T-cell (primary cell): ENCODE measurements at regions of chr12 and their contacts with region 1.

Region 1: DNA sequence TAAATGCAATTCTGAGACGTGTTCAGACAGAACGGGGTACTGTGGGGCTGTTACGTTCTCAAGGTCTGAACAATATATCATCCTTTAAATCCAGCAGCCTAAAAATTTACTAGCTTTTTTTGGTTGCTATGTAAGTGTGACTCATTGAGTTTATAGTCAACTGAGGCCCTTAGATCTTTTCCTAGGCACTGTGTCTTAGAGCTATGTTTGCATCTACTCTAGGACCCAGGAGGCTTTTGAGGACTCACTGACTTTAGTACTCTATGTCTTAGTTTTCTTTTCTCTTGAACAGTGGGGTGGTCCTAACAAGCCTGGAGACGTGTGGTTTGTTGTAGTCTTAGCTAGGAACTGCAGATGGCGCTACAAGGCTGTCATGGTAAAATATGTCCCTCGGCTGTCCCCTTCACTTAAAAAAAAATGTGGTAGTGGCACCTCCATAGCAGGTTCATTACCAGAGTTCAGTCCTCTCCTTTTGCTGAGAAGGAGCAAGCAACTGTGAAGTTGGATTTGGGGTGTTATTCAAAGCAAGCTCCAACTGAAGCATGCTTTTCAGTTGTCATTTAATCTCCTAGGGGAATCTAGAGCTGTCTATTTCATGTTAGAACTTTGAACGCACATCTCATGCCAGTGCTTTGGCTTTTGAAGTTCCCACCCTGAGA is 8.7 kb upstream of the SPATS2 start:
- DNase-seq: peak in 28 of 35 experiments; percentile 35 to 86 (median 52)
- ATAC-seq: peak; percentile 83 to 98 (median 94)
- H3K4me3 ChIP-seq: no peak overlapping the region
- H3K4me3 Mint-ChIP-seq: no peak overlapping the region
- H3K27ac ChIP-seq: no peak overlapping the region
- H3K27ac Mint-ChIP-seq: no peak overlapping the region
- H3K4me1 ChIP-seq: no peaks in the 10 kb centered on the region
- H3K4me1 Mint-ChIP-seq: peaks cover 2 to 8% (median 5%) of the 10 kb centered on the region in 3 donors
- H3K27me3 ChIP-seq: peaks cover 0 to 21% of the 10 kb centered on the region in 2 experiments
- H3K27me3 Mint-ChIP-seq: peaks cover 14 to 27% of the 10 kb centered on the region in 2 donors

Region 2: DNA sequence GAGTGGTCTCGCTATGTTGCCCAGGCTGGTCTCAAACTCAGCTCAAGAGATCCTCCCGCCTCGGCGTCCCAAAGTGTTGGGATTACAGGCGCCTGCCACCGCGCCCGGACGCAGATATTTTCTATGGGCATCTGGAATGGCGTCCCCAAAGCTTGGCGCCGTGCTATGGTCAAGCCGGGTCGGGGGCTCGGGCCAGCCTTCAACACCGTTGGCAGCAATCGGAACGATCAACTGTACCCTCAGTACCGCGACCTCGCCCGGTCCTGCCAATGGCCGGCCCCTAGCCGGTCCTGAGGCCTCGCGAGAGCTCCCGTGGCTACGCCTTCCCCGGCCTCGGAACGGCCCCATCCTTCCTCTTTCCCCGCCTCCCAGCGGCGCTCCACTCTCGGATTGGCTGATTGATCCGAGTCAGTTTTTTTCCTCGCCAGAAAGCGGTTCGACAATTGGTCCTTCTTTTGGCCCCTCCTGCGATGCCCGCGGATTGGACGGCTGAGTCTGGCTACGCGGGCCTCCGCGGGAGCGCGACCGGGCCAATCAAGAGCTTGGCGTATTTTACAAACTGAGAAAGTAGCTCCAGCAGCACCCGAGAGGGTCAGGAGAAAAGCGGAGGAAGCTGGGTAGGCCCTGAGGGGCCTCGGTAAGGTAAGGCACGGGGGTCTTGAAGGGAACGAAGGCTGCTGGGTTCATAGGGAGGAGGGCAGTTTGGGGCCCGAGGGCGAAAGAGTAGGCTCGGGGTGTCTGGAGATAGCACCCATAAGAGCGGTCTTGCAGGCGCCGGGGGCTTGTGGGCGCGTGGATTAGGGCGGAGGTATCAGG is 35.7 kb before region 1 on chr12 and contains the start of gene TROAP:
- CTCF ChIA-PET with region 1: interaction called in 1 of 2 experiments, 12 read pairs
- POLR2A ChIA-PET with region 1: no interaction called
- DNase-seq: peak; percentile 92 to 98 (median 96)
- ATAC-seq: peak; percentile 96 to 99 (median 98)
- H3K4me3 ChIP-seq: peak within 1 kb of the TSS; percentile 83 to 95
- H3K4me3 Mint-ChIP-seq: peak within 1 kb of the TSS; percentile 86 to 90 (median 87)
- H3K27ac ChIP-seq: peak within 1 kb of the TSS; percentile 60
- H3K27ac Mint-ChIP-seq: peak within 1 kb of the TSS; percentile 71 to 75
- H3K4me1 ChIP-seq: peaks cover 5 to 22% of the 10 kb centered on the region in 2 experiments
- H3K4me1 Mint-ChIP-seq: peaks cover 17 to 22% (median 20%) of the 10 kb centered on the region in 3 donors
- H3K27me3 ChIP-seq: no peaks in the 10 kb centered on the region
- H3K27me3 Mint-ChIP-seq: no peaks in the 10 kb centered on the region
- total RNA-seq, gene TROAP: 0.98 to 1.9 (median 1.3) TPM

Region 3: GRCh38 chr12:49331380-49332222 is 27.0 kb before region 1 on chr12:
- CTCF ChIA-PET with region 1: interaction called, 6 to 13 read pairs
- POLR2A ChIA-PET with region 1: no interaction called
- DNase-seq: no peak
- ATAC-seq: peak in 3 of 4 experiments; percentile 37 to 67 (median 50)
- H3K4me3 ChIP-seq: no peak overlapping the region
- H3K4me3 Mint-ChIP-seq: no peak overlapping the region
- H3K27ac ChIP-seq: no peak overlapping the region
- H3K27ac Mint-ChIP-seq: no peak overlapping the region
- H3K4me1 ChIP-seq: peaks cover 0 to 14% of the 10 kb centered on the region in 2 experiments
- H3K4me1 Mint-ChIP-seq: peaks cover 1 to 15% (median 6%) of the 10 kb centered on the region in 3 donors
- H3K27me3 ChIP-seq: peaks cover 5 to 63% of the 10 kb centered on the region in 2 experiments
- H3K27me3 Mint-ChIP-seq: peaks cover 36 to 43% of the 10 kb centered on the region in 2 donors

Region 4: DNA sequence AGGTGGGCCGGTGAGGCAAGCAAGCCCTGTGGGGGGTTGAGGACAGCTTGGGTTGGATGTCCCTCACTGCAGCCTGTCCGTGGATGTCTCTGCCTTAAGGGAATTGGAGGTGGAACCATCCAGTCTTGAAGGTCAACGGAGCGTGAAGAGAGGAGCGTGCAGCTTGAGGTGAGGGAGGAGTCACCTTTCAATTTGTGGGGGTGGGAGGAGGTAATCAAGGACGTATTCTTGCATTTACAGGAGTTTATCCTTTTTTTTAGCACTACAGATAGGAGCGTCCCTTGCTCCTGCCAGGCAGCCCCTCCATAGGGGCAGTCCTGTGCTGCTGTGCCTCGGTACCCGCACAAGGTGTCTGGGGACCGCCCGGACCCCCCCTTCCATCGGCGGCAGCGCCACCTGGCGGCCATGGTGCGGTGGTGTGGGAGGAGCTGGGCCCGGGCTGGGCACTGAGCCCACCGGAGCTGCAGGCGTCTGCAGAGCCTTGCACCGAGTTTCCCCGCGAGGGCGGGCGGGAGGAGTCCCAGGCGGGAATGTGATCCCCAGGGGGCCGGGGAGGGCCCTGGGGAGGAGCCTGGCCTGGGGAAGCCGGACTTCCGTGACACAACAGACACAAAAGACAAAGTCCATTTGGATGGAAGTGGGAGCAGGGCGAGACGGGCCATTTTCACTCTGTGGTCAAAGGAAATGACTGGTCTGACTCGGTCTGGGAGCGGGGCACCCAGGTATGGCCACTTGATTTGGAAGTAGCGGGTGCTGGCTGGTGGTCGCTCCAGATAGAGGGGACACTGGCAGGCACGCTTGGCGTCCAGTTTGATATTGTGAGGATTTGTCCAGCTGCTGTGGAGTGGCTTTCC is 11.0 kb before region 1 on chr12:
- CTCF ChIA-PET with region 1: interaction called, 6 to 22 read pairs
- POLR2A ChIA-PET with region 1: interaction called in 1 of 2 experiments, 4 read pairs
- DNase-seq: peak; percentile 44 to 85 (median 71)
- ATAC-seq: peak; percentile 80 to 86 (median 82)
- H3K4me3 ChIP-seq: peak overlapping the region; percentile 47 to 86
- H3K4me3 Mint-ChIP-seq: peak overlapping the region; percentile 73 to 80 (median 80)
- H3K27ac ChIP-seq: no peak overlapping the region
- H3K27ac Mint-ChIP-seq: peak overlapping the region in 1 of 2 donors; percentile 43
- H3K4me1 ChIP-seq: peaks cover 30 to 55% of the 10 kb centered on the region in 2 experiments
- H3K4me1 Mint-ChIP-seq: peaks cover 31 to 48% (median 42%) of the 10 kb centered on the region in 3 donors
- H3K27me3 ChIP-seq: peaks cover 23 to 91% of the 10 kb centered on the region in 2 experiments
- H3K27me3 Mint-ChIP-seq: peaks cover 40 to 75% of the 10 kb centered on the region in 2 donors

Region 5: GRCh38 chr12:49462083-49462744 is 103.6 kb after region 1 on chr12:
- CTCF ChIA-PET with region 1: interaction called in 1 of 2 experiments, 11 read pairs
- POLR2A ChIA-PET with region 1: no interaction called
- DNase-seq: no peak
- ATAC-seq: no peak
- H3K4me3 ChIP-seq: no peak overlapping the region
- H3K4me3 Mint-ChIP-seq: no peak overlapping the region
- H3K27ac ChIP-seq: no peak overlapping the region
- H3K27ac Mint-ChIP-seq: no peak overlapping the region
- H3K4me1 ChIP-seq: no peaks in the 10 kb centered on the region
- H3K4me1 Mint-ChIP-seq: no peaks in the 10 kb centered on the region
- H3K27me3 ChIP-seq: no peaks in the 10 kb centered on the region
- H3K27me3 Mint-ChIP-seq: no peaks in the 10 kb centered on the region

Region 6: DNA sequence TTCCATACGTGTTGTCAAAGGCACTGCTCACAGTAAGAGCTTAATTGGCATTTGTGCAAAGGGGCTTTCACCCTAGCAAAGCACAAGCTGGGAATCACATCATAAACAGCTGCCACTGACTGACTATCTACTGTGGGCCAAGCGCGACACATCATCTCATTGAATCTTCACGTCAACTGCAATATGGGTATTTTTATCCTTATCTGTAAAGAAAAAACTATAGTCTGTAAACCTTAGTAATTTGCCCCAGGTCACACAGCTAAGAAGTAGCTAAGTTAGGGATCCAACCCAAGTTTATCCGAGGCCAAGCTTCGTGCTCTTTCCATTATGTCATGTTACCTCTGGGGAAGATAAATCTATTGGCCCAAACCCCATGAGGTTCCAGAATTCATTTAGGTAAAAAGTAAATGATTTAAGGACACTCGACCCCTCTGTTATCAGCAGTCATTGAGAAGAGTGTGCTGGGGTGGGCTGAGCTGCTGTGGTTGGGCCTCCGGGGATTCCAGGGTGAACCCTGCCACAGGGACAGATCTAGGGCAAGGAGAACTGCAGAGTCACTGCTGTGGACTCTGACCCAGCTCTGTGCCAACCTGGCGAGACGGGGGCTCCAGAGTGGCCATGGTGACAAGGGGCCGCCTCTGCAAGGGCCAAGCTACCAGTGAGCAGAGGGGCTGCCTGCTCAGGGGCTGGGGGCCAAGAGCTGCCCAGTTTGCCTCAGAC is 442.0 kb after region 1 on chr12:
- CTCF ChIA-PET with region 1: no interaction called
- POLR2A ChIA-PET with region 1: no interaction called
- DNase-seq: no peak
- ATAC-seq: no peak
- H3K4me3 ChIP-seq: no peak overlapping the region
- H3K4me3 Mint-ChIP-seq: no peak overlapping the region
- H3K27ac ChIP-seq: no peak overlapping the region
- H3K27ac Mint-ChIP-seq: no peak overlapping the region
- H3K4me1 ChIP-seq: no peaks in the 10 kb centered on the region
- H3K4me1 Mint-ChIP-seq: no peaks in the 10 kb centered on the region
- H3K27me3 ChIP-seq: no peaks in the 10 kb centered on the region
- H3K27me3 Mint-ChIP-seq: no peaks in the 10 kb centered on the region

Region 7: DNA sequence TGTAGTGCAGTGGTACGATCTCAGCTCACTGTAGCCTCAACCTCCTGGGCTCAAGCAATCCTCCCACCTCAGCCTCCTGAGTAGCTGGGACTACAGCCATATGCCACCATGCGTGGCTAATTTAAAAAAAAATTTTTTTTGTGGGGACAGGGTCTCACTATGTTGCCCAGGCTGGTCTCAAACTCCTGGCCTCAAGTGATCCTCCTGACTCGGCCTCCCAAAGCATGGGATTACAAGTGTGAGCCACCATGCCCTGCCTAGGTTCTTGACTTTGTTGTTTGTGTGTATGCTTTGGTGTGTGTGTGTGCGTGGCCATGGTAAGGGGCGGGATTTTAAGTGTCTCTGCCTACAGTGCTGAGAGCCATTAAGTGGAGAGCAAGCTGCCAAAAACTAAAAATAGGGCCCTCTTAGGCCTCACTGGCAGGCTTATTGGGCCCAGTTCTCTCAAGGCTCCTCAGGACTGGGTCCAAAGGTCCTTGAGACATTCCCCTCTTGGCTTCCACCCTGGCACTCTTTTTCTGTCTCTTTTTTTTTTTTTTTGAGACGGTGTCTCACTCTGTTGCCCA is 758.5 kb after region 1 on chr12:
- CTCF ChIA-PET with region 1: no interaction called
- POLR2A ChIA-PET with region 1: no interaction called
- DNase-seq: no peak
- ATAC-seq: no peak
- H3K4me3 ChIP-seq: no peak overlapping the region
- H3K4me3 Mint-ChIP-seq: peak overlapping the region in 2 of 3 donors; percentile 21 to 53
- H3K27ac ChIP-seq: no peak overlapping the region
- H3K27ac Mint-ChIP-seq: peak overlapping the region in 1 of 2 donors; percentile 11
- H3K4me1 ChIP-seq: peaks cover 2 to 43% of the 10 kb centered on the region in 2 experiments
- H3K4me1 Mint-ChIP-seq: peaks cover 40 to 62% (median 57%) of the 10 kb centered on the region in 3 donors
- H3K27me3 ChIP-seq: no peaks in the 10 kb centered on the region
- H3K27me3 Mint-ChIP-seq: no peaks in the 10 kb centered on the region